GM13977 (cell line): ENCODE measurements at regions of chr19 and their contacts with region 1.

Region 1: GRCh38 chr19:6862673-6863078 is 24.7 kb upstream of the ADGRE1 start:
- DNase-seq: peak; percentile 87
- CTCF ChIP-seq: peak; percentile 98

Region 2: DNA sequence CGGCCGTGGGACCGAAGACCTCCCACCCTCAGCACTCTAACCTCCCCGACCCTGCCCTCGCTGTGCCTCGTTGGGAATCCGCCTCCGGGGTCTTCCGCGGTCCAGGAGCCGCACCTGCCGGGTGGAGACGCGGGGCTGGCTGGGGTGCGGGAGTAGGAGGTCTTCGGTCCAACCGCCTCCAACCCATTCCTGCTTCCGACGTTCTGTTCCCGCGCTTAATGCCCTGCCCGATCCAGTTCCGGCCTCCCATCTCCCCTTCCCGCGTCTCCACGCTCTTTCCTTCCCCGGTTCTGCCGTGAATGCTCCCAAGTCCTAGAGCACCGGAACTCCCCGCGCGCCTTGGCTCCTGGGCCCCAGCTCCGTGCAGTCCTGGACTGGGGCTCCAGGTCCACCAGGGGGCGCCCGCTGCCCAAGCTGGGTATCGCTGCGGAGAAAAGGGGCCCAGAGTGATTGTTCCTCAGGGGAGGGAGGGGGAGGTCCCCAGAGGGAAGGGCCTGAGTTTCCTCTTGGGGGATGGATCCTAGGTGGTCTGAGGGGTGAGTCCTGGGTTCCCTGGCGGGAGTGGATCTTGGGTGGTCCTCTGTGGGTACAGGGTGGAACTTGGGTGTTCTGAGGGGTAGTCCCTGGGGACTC is 345.9 kb before region 1 on chr19:
- in situ Hi-C with region 1: loop called (anchors 25 kb)
- DNase-seq: peak; percentile 83
- CTCF ChIP-seq: peak; percentile 95

Region 3: DNA sequence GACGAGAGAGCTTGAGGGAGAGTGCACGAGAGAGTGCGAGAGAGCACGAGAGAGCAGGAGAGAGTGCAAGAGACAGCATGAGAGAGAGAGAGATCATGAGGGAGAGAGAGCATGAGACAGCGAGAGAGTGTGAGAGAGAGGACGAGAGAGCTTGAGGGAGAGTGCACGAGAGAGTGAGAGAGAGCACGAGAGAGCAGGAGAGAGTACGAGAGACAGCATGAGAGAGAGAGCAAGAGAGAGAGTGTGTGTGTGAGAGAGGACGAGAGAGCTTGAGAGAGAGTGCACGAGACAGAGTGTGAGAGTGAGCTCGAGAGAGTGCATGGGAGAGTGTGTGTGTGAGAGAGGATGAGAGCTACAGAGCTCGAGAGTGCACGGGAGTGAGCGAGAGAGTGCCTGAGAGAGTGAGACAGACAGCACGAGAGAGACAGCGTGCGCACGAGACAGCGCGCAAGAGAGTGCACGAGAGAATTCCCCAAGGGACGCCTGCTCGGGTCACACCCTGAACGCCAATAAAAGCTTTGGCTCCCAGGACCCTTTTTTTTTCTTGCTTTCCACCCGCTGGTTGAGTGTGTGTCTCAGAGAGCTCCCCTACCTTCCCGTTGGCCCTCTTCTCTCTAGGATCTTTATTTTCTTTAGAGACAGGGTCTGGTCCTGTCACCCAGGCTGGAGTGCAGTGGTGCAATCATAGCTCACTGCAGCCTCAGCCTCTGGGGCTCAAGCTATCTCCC is 275.4 kb before region 1 on chr19:
- in situ Hi-C with region 1: no loop called
- DNase-seq: peak; percentile 39
- CTCF ChIP-seq: no peak

Region 4: DNA sequence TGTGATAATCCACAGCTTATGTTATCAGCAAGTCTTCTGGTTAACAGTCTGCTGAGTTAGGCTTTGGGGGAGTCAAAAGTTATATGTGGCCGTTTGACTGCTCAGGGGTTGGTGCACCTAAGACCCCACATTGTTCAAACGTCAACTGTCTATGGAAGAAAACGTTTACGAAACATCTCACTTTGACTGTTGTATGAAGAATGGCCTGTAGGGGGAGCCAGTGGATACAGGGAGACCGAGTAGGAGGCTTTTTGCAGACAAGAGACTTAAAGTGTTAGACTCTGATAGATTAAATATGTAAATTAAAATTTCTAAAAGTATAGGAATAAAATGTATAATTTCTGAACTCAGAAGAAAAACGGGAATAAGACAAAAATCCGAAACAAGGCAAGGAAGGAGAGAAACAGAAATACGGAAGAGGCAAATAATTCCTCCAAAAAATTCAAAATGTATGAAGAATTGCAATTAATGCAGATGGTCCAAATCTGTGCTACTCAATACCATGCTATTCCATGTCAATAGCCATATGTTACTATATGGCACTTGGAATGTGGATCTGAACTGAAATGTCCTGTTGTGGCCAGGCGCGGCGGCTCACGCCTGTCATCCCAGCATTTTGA is 230.6 kb before region 1 on chr19:
- in situ Hi-C with region 1: loop called (anchors 25 kb)
- DNase-seq: peak; percentile 60
- CTCF ChIP-seq: peak; percentile 71

Region 5: GRCh38 chr19:6737284-6738046 is 125.2 kb before region 1 on chr19 and contains the start of gene GPR108:
- in situ Hi-C with region 1: loop called (anchors 10 kb)
- DNase-seq: peak; percentile 99
- CTCF ChIP-seq: no peak

Region 6: DNA sequence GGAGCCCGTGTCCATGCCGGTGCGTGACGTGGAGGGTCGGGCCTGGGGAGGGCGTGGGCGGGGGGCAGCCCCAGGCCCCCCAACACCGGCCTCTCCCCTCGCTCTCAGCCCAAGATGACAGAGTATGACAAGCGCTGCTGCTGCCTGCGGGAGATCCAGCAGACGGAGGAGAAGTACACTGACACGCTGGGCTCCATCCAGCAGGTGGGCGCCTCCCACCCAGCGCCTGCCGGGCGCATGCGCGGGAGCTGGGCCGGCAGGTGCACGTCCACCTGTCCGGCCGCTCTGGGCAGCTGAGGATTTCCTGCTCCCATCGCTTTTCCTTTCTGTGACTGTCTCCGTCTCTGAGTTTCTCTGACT is 40.4 kb before region 1 on chr19:
- in situ Hi-C with region 1: no loop called
- DNase-seq: no peak
- CTCF ChIP-seq: no peak